Mammary epithelial cell (primary cell): ENCODE measurements at regions of chr2 and their contacts with region 1.

Region 1: GRCh38 chr2:208399202-208399601 is 7.4 kb upstream of the PTH2R start:
- DNase-seq: no peak
- H3K4me3 ChIP-seq: no peak overlapping the region
- H3K27ac ChIP-seq: no peak overlapping the region
- H3K4me1 ChIP-seq: no peaks in the 10 kb centered on the region
- H3K27me3 ChIP-seq: peaks cover 2% of the 10 kb centered on the region
- CTCF ChIP-seq: no peak

Region 2: GRCh38 chr2:208373460-208374089 is 25.6 kb before region 1 on chr2:
- CTCF ChIA-PET with region 1: no interaction called
- dilution Hi-C with region 1: no loop called
- in situ Hi-C with region 1: no loop called
- intact Hi-C with region 1: no loop called
- DNase-seq: peak; percentile 24
- H3K4me3 ChIP-seq: no peak overlapping the region
- H3K27ac ChIP-seq: no peak overlapping the region
- H3K4me1 ChIP-seq: no peaks in the 10 kb centered on the region
- H3K27me3 ChIP-seq: no peaks in the 10 kb centered on the region
- CTCF ChIP-seq: peak; percentile 84 to 85

Region 3: DNA sequence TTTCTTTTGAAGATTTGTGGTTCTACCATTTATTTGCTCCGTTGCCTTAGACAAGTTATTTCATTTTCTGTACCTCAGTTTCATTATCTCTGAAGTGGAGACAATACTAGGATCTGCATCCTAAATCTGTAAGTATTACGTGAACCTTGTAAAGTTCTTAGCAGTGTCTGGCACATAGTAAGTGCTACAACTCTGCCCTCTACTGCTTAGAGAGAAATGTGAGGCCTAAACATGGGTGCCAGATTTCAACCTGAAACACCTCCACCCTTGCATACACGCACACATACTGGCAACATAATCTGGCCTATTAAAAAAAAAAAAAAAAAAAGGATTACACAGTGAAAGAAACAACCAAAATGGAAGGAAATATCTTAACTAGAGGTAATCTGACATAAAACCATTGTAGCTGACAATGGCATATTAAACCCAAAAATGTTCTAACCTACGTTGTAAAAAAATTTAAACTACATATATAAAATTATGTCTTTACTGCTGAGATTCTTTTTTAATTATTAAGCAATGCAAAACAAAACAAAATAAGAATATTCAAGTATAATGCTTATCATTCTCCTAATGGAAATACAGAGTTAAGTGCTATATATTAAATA is 1157.3 kb after region 1 on chr2:
- CTCF ChIA-PET with region 1: no interaction called
- dilution Hi-C with region 1: no loop called
- in situ Hi-C with region 1: loop called in 1 of 2 experiments (anchors 25 kb)
- intact Hi-C with region 1: loop called (anchors 5 kb)
- DNase-seq: peak; percentile 40
- H3K4me3 ChIP-seq: no peak overlapping the region
- H3K27ac ChIP-seq: no peak overlapping the region
- H3K4me1 ChIP-seq: no peaks in the 10 kb centered on the region
- H3K27me3 ChIP-seq: no peaks in the 10 kb centered on the region
- CTCF ChIP-seq: peak; percentile 42 to 74